ENCODE measurements at regions of chr11 and their contacts with region 1.

Region 1: DNA sequence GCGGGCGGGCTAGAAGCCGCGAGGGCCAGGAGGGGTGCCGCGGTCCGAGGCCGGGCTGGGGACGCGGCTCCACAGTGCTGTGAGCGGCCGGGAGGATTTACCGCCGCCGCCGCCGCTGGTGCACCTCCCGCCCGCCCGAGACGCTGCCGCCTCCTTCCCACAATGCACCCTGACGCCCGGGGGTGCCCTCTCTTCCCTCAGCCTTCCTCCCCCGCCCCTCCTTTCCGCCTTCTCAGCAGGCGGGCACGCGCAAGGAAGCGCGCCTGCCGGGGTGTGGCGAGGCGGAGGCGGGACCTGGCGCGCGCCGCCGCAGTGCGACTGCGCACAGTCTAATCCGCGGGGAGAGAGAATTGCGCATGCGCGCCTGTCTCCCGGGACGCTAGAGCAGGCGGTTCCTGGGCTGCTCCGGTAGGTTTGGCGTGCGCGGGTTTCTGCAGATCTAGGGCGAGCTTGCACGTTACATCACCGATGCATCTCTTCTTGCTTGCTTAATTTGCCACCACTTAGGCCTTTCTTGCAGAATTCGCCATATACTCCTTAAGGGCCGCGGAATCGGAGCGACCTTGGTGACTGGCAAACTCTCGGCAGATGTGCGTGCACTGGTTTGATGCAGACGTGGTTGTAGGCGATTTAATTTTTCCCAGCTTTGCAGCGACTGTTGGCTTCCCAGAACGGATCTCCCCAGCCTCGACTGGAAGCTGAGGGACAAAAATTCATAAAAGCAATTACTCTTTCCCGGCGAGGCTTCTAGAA is at the starts of genes GVQW3 and THAP12:
- DNase-seq: peak; percentile 98
- ATAC-seq: peak; percentile 90
- H3K4me3 Mint-ChIP-seq: peak within 1 kb of the TSS; percentile 82
- H3K27ac Mint-ChIP-seq: peak within 1 kb of the TSS; percentile 95
- H3K4me1 Mint-ChIP-seq: peaks cover 56% of the 10 kb centered on the region
- H3K27me3 Mint-ChIP-seq: no peaks in the 10 kb centered on the region
- total RNA-seq, gene GVQW3: 3.2 to 3.7 TPM
- total RNA-seq, gene THAP12: 53.6 to 60.9 TPM

Region 2: DNA sequence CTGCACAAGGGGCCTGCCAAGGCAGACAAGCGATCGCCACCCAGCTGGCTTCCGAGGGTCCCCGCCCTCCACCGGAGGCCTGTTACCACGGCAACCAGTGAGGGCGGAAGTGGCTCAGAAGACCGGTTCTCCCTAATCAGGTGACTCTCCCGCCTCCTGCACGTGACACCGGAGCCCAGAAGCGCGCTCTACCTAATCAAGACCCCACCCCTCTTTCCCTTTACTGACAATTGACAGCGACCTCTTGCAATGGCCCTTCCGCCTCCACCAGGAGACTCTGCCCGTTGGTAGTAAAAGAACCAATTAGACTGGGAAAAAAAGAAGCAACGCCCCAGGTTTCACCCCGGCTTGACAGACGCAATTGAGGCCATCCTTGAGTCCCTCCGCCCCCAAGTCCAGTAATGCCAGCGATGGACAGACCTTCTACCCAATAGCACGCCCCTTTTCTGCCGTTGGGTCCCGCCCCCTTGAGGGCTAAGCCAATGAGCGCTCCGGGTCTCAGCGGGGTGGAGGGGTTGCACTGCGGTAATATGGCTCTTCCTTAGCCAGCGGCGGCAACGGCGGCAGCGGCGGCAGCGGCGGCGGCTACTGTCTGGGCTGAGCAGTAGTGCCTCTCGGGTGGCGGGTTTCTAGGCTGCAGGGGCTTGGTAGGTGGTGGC is 566.3 kb before region 1 on chr11 and contains the start of gene UVRAG:
- CTCF ChIA-PET with region 1: no interaction called
- POLR2A ChIA-PET with region 1: no interaction called
- intact Hi-C with region 1: loop called (anchors 2 to 10 kb)
- DNase-seq: peak; percentile 98
- ATAC-seq: peak; percentile 93
- H3K4me3 Mint-ChIP-seq: no peak within 1 kb of the TSS
- H3K27ac Mint-ChIP-seq: peak within 1 kb of the TSS; percentile 80
- H3K4me1 Mint-ChIP-seq: peaks cover 16% of the 10 kb centered on the region
- H3K27me3 Mint-ChIP-seq: no peaks in the 10 kb centered on the region
- total RNA-seq, gene UVRAG: 11.4 to 13.4 TPM

Region 3: GRCh38 chr11:76207642-76208401 is 173.3 kb before region 1 on chr11:
- CTCF ChIA-PET with region 1: no interaction called
- POLR2A ChIA-PET with region 1: no interaction called
- intact Hi-C with region 1: loop called (anchors 1 to 5 kb)
- DNase-seq: peak; percentile 87
- ATAC-seq: peak; percentile 76
- H3K4me3 Mint-ChIP-seq: peak overlapping the region; percentile 60
- H3K27ac Mint-ChIP-seq: no peak overlapping the region
- H3K4me1 Mint-ChIP-seq: peaks cover 15% of the 10 kb centered on the region
- H3K27me3 Mint-ChIP-seq: peaks cover 55% of the 10 kb centered on the region

Region 4: DNA sequence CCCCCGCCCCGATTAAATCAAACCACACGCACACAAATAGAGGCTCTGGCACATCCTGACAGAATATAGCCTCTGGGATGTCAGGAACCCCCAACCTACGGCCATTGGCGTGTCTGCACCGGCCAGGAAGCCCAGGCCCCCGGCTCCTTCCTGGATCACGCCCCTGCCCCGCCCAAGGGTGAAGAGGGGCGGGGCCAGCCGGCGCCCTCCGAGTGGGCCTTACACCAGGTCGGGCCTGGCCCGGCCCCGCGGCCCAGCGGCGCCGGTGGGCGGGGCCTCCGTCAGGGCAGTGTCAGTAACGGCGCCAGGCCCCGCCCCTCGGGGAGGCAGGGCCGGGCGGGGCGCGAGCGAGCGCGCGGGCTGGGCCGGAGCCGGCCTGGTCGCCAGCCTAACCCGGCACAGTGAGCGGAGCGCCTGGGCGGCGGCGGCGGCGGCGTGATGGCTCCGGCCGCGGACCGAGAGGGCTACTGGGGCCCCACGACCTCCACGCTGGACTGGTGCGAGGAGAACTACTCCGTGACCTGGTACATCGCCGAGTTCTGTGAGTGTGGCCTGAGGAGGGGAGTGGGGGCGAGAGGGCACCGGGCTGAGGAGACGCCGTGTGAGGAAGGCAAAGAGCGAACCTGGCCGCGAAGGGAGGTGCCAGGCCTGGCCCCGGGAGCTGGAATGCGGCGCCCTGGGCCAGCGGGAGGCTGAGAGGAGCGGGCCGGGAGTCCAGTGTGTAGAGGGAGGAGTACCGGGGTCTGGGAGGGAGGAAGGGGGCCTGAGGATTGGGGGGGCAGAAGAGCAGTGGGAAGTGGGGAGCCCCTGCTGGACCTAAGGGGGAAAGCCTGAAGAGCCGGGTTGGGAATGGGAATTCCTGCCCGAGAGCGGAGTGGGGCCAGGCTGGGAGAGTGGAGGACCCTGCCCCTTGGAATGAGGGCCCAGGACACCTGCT is 479.7 kb after region 1 on chr11 and contains the start of gene ACER3:
- CTCF ChIA-PET with region 1: no interaction called
- POLR2A ChIA-PET with region 1: no interaction called
- intact Hi-C with region 1: loop called in 1 of 2 experiments (anchors 2 kb)
- DNase-seq: peak; percentile 94
- ATAC-seq: peak; percentile 99
- H3K4me3 Mint-ChIP-seq: peak within 1 kb of the TSS; percentile 72
- H3K27ac Mint-ChIP-seq: peak within 1 kb of the TSS; percentile 70
- H3K4me1 Mint-ChIP-seq: peaks cover 20% of the 10 kb centered on the region
- H3K27me3 Mint-ChIP-seq: no peaks in the 10 kb centered on the region
- total RNA-seq, gene ACER3: 8.9 to 10.3 TPM

Region 5: GRCh38 chr11:77820563-77821348 is 1439.6 kb after region 1 on chr11 and contains the starts of genes AAMDC and RSF1:
- CTCF ChIA-PET with region 1: no interaction called
- POLR2A ChIA-PET with region 1: no interaction called
- intact Hi-C with region 1: loop called in 1 of 2 experiments (anchors 2 kb)
- DNase-seq: peak; percentile 99
- ATAC-seq: peak; percentile 88
- H3K4me3 Mint-ChIP-seq: peak within 1 kb of the TSS; percentile 97
- H3K27ac Mint-ChIP-seq: peak within 1 kb of the TSS; percentile 98
- H3K4me1 Mint-ChIP-seq: peaks cover 35% of the 10 kb centered on the region
- H3K27me3 Mint-ChIP-seq: no peaks in the 10 kb centered on the region
- total RNA-seq, gene AAMDC: 4.8 to 5.3 TPM
- total RNA-seq, gene RSF1: 49.9 to 59.2 TPM